Activated naive CD8-positive, alpha-beta T cell treated with anti-CD3 and anti-CD28 coated beads, Interleukin-2, amount 10 ng/mL, durations not matched to agents 7 days and 5 days (primary cell): ENCODE measurements at regions of chr17 and their contacts with region 1.

Region 1: GRCh38 chr17:64506576-64507477 is at the start of gene CEP95:
- DNase-seq: peak; percentile 94
- ATAC-seq: peak; percentile 67
- H3K4me3 Mint-ChIP-seq: peak within 1 kb of the TSS; percentile 98
- H3K27ac Mint-ChIP-seq: peak within 1 kb of the TSS; percentile 100
- H3K4me1 Mint-ChIP-seq: peaks cover 42% of the 10 kb centered on the region
- H3K27me3 Mint-ChIP-seq: no peaks in the 10 kb centered on the region
- total RNA-seq, gene CEP95: 71.0 to 71.7 TPM

Region 2: GRCh38 chr17:64145757-64146417 is 360.9 kb before region 1 on chr17:
- POLR2A ChIA-PET with region 1: interaction called, 13 read pairs
- DNase-seq: peak; percentile 86
- ATAC-seq: peak; percentile 97
- H3K4me3 Mint-ChIP-seq: no peak overlapping the region
- H3K27ac Mint-ChIP-seq: no peak overlapping the region
- H3K4me1 Mint-ChIP-seq: peaks cover 25% of the 10 kb centered on the region
- H3K27me3 Mint-ChIP-seq: no peaks in the 10 kb centered on the region

Region 3: DNA sequence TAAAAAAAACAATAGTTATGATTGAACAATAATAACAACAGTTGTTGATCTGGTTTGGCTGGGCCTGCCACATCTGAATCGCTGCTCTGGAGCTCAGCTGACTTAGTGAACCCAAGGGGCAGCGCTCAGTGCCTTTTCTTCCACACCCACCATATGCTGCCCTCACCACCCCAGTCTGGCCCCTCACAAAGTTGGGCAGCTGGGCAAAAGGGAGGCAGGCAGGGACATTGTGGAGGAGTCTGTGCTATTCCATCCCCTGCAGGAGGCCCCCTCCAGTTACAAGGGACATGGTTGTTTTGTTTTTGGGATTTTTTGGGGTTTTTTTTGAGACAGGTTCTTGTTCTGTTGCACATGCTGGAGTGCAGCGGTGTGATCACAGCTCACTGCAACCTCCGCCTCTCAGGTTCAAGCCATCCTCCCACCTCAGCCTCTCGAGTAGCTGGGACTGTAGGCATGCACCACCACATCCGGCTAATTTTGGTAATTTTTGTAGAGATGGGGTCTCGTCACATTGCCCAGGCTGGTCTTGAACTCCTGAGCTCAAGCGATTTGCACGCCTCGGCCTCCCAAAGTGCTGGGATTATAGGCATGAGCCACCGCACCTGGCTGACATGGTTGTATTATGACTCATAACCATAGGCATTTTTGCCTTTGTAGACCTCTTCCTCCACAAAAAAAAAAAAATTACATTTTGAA is 107.6 kb before region 1 on chr17:
- POLR2A ChIA-PET with region 1: interaction called, 40 read pairs
- DNase-seq: no peak
- ATAC-seq: no peak
- H3K4me3 Mint-ChIP-seq: peak overlapping the region; percentile 47
- H3K27ac Mint-ChIP-seq: peak overlapping the region; percentile 86
- H3K4me1 Mint-ChIP-seq: peaks cover 52% of the 10 kb centered on the region
- H3K27me3 Mint-ChIP-seq: no peaks in the 10 kb centered on the region

Region 4: GRCh38 chr17:64420143-64420971 is 86.5 kb before region 1 on chr17:
- POLR2A ChIA-PET with region 1: interaction called, 46 read pairs
- DNase-seq: no peak
- ATAC-seq: peak; percentile 69
- H3K4me3 Mint-ChIP-seq: no peak overlapping the region
- H3K27ac Mint-ChIP-seq: no peak overlapping the region
- H3K4me1 Mint-ChIP-seq: peaks cover 10% of the 10 kb centered on the region
- H3K27me3 Mint-ChIP-seq: no peaks in the 10 kb centered on the region

Region 5: GRCh38 chr17:64491034-64491859 is 15.6 kb before region 1 on chr17:
- POLR2A ChIA-PET with region 1: interaction called, 179 read pairs
- DNase-seq: peak; percentile 59
- ATAC-seq: peak; percentile 78
- H3K4me3 Mint-ChIP-seq: no peak overlapping the region
- H3K27ac Mint-ChIP-seq: no peak overlapping the region
- H3K4me1 Mint-ChIP-seq: peaks cover 36% of the 10 kb centered on the region
- H3K27me3 Mint-ChIP-seq: no peaks in the 10 kb centered on the region

Region 6: GRCh38 chr17:64554028-64554637 is 47.3 kb after region 1 on chr17:
- POLR2A ChIA-PET with region 1: no interaction called
- DNase-seq: no peak
- ATAC-seq: no peak
- H3K4me3 Mint-ChIP-seq: no peak overlapping the region
- H3K27ac Mint-ChIP-seq: no peak overlapping the region
- H3K4me1 Mint-ChIP-seq: no peaks in the 10 kb centered on the region
- H3K27me3 Mint-ChIP-seq: no peaks in the 10 kb centered on the region

Region 7: GRCh38 chr17:64599187-64599676 is 92.4 kb after region 1 on chr17:
- POLR2A ChIA-PET with region 1: interaction called, 17 read pairs
- DNase-seq: peak; percentile 60
- ATAC-seq: peak; percentile 100
- H3K4me3 Mint-ChIP-seq: peak overlapping the region; percentile 77
- H3K27ac Mint-ChIP-seq: peak overlapping the region; percentile 86
- H3K4me1 Mint-ChIP-seq: peaks cover 22% of the 10 kb centered on the region
- H3K27me3 Mint-ChIP-seq: no peaks in the 10 kb centered on the region

Region 8: GRCh38 chr17:64661976-64662773 is 155.3 kb after region 1 on chr17 and contains the start of gene SMURF2:
- POLR2A ChIA-PET with region 1: interaction called, 19 read pairs
- DNase-seq: peak; percentile 86
- ATAC-seq: peak; percentile 86
- H3K4me3 Mint-ChIP-seq: peak within 1 kb of the TSS; percentile 96
- H3K27ac Mint-ChIP-seq: peak within 1 kb of the TSS; percentile 97
- H3K4me1 Mint-ChIP-seq: peaks cover 22% of the 10 kb centered on the region
- H3K27me3 Mint-ChIP-seq: no peaks in the 10 kb centered on the region
- total RNA-seq, gene SMURF2: 24.9 to 27.0 TPM